Naive thymus-derived CD8-positive, alpha-beta T cell (primary cell): ENCODE measurements at regions of chr7 and their contacts with region 1.

Region 1: GRCh38 chr7:39580149-39580874 is 14.1 kb downstream of the YAE1 start:
- DNase-seq: peak; percentile 56 to 87 (median 70)
- ATAC-seq: peak; percentile 89 to 97
- H3K4me3 Mint-ChIP-seq: no peak overlapping the region
- H3K27ac Mint-ChIP-seq: peak overlapping the region in 5 of 10 donors; percentile 5 to 85 (median 67)
- H3K4me1 Mint-ChIP-seq: peaks cover 5 to 11% (median 8%) of the 10 kb centered on the region in 4 donors
- H3K27me3 Mint-ChIP-seq: no peaks in the 10 kb centered on the region

Region 2: GRCh38 chr7:39609113-39609934 is 29.0 kb after region 1 on chr7:
- POLR2A ChIA-PET with region 1: no interaction called
- DNase-seq: peak in 4 of 10 donors; percentile 19 to 29 (median 25)
- ATAC-seq: peak; percentile 81 to 86
- H3K4me3 Mint-ChIP-seq: peak overlapping the region; percentile 10 to 83 (median 72)
- H3K27ac Mint-ChIP-seq: peak overlapping the region in 8 of 10 donors; percentile 12 to 89 (median 75)
- H3K4me1 Mint-ChIP-seq: peaks cover 22 to 49% (median 40%) of the 10 kb centered on the region in 4 donors
- H3K27me3 Mint-ChIP-seq: peaks cover 7 to 33% (median 20%) of the 10 kb centered on the region in 5 donors

Region 3: GRCh38 chr7:39746103-39746819 is 165.9 kb after region 1 on chr7:
- POLR2A ChIA-PET with region 1: interaction called, 31 read pairs
- DNase-seq: peak; percentile 28 to 76 (median 50)
- ATAC-seq: peak; percentile 59 to 70
- H3K4me3 Mint-ChIP-seq: peak overlapping the region in 3 of 10 donors; percentile 16 to 39 (median 24)
- H3K27ac Mint-ChIP-seq: peak overlapping the region in 7 of 10 donors; percentile 9 to 90 (median 65)
- H3K4me1 Mint-ChIP-seq: peaks cover 3 to 12% (median 7%) of the 10 kb centered on the region in 4 donors
- H3K27me3 Mint-ChIP-seq: no peaks in the 10 kb centered on the region